Left ventricle myocardium inferior (tissue), 1 donor: ENCODE measurements at regions of chr1 and their contacts with region 1.

Region 1: GRCh38 chr1:186212544-186213226 is 162.4 kb downstream of the TPR start:
- DNase-seq: no peak
- H3K4me3 ChIP-seq: no peak overlapping the region
- H3K27ac ChIP-seq: no peak overlapping the region
- H3K4me1 ChIP-seq: peaks cover 8% of the 10 kb centered on the region
- H3K27me3 ChIP-seq: no peaks in the 10 kb centered on the region
- CTCF ChIP-seq: peak; percentile 87

Region 2: DNA sequence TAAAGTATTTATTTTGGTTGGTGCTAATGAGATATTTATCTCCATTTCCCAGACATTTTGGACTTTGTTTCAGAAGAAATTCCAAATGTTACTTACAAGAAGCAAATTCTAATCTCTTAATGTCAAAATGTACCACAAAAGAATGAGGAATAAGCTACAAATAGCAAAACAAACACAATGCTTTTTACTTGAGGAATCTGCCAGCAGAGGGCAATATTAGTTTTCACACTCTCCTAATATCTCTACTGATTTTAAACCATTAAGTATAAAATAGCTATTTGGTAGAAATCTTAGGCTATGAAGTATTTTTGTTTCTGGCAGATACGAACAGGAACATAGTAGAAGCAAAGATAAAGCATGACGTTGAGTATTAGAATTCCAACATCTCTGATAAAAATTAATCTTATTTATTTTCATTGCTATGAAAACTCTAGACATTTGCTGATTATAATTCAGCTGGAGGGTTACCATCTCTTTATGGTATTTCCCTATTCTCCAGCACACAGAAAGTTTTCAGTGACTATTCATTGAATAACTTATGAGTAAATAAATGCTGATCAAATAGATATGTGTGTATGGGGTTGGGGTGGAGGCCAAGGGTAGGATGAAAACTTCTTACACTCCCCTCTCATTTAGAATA is 491.9 kb before region 1 on chr1:
- intact Hi-C with region 1: loop called (anchors 5 kb)
- DNase-seq: no peak
- H3K4me3 ChIP-seq: no peak overlapping the region
- H3K27ac ChIP-seq: no peak overlapping the region
- H3K4me1 ChIP-seq: peaks cover 10% of the 10 kb centered on the region
- H3K27me3 ChIP-seq: no peaks in the 10 kb centered on the region
- CTCF ChIP-seq: peak; percentile 73

Region 3: GRCh38 chr1:185813401-185813979 is 399.2 kb before region 1 on chr1:
- intact Hi-C with region 1: loop called (anchors 5 kb)
- DNase-seq: no peak
- H3K4me3 ChIP-seq: no peak overlapping the region
- H3K27ac ChIP-seq: no peak overlapping the region
- H3K4me1 ChIP-seq: no peaks in the 10 kb centered on the region
- H3K27me3 ChIP-seq: no peaks in the 10 kb centered on the region
- CTCF ChIP-seq: peak; percentile 67

Region 4: DNA sequence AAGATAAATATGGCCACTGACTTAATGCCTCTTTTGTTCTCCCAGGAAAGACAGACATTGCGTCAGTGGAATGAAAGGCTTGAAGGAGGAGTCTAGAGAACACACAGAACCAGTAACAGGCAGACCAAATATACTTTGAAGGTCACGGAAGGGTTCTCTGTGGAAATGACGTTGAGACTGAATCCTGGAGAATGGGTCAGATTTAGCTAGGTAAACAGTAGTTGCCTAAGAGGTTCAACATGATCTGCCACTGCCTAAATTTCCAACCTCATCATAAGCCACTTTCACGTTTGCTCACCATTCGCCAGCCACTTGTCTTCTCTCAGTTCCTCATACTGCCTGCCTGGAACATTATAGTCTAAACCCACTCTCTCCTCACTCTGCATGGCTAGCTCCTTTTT is 636.6 kb after region 1 on chr1:
- intact Hi-C with region 1: no loop called
- DNase-seq: no peak
- H3K4me3 ChIP-seq: no peak overlapping the region
- H3K27ac ChIP-seq: peak overlapping the region; percentile 29
- H3K4me1 ChIP-seq: no peaks in the 10 kb centered on the region
- H3K27me3 ChIP-seq: no peaks in the 10 kb centered on the region
- CTCF ChIP-seq: no peak